Activated B cell treated with CpG ODN at 0.5 μM for 24 hours (primary cell): ENCODE measurements at regions of chr2 and their contacts with region 1.

Region 1: DNA sequence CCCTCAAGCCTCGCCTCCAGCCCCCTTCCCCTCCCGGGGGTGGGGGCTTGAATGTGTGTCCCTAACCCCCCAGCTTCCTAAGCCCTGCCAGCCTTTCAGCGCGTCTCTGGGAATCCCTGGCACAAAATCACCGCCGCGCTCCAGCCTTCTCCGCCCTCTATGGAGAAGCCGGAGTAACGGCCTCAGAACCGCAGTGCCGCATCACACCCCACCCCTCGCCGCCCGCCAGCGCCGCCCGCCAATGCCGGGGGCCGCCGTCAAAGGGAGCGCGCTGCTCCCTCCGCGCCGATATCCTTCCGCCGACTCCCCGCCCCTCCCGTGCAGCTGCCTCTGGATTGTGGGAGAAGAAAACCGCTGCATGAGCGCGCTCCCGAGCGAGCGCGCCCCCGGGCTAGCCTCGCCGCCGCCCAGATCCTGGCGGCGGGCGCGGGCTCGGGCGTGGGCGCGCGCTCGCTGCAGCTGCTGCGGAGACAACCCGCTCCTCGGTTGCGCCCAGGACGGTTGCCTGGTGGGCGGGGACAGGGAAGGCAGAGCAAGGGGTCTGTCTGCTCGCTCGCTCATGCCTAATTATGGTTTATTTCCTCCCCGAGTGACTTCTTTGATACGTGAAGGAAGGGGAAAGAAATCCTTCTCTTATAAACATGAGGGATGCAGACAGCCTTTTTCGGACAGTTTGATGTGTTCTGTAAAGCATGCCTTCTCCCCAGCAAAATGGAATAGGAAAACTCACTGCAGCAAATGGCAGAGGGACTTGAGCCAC is at the start of gene CCDC88A:
- DNase-seq: peak; percentile 86
- ATAC-seq: peak; percentile 87
- H3K4me3 Mint-ChIP-seq: peak within 1 kb of the TSS; percentile 95
- H3K27ac Mint-ChIP-seq: peak within 1 kb of the TSS; percentile 92
- H3K4me1 Mint-ChIP-seq: peaks cover 46% of the 10 kb centered on the region
- H3K27me3 Mint-ChIP-seq: no peaks in the 10 kb centered on the region
- CTCF ChIP-seq: no peak
- total RNA-seq, gene CCDC88A: 25.6 and 35.6 TPM in 2 replicates

Region 2: DNA sequence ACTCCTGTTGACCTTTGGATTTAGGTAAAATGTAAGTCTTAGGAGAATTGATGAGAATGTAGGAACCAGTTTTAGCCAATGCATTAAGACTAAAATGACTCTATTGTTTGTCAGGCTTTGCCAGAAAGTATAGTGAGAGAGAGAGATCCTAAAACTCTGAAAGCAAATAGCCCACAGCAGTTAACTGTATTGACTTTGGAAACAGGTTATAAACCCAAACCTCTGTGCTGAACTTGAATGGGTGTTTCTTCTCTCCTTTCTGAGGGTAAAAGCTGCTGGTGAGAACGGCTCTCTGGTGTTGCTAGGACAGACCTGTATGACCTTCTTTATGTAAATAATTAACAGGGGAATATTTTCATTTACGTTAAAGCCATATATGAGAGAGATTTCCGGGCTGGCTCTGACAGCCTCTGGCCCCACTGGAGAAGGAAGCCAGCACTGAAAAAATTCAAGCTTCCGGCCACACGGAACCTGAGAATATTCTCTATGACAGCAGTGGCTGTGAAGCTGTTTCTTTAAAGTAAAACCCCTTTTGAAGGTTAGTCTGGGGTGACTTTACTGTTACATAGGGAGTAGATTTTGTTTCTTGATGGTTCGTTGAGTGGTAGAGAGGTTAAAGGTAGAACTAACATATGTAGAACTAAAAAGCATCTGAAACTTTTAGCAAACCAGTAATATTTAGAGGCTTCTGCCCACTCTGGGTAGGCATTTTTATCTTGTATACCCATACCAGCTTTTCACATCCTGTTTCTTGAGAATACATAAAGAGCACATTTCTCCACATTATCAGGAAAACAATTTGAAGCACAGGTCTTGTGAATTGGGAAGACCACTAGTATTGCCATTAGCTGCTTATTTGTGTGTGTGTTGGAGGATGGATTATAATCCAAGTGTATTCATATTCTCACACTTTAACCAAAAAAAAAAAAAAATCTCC is 839.9 kb before region 1 on chr2:
- CTCF ChIA-PET with region 1: no interaction called
- POLR2A ChIA-PET with region 1: no interaction called
- intact Hi-C with region 1: loop called (anchors 5 kb)
- DNase-seq: no peak
- ATAC-seq: peak; percentile 66
- H3K4me3 Mint-ChIP-seq: peak overlapping the region; percentile 77
- H3K27ac Mint-ChIP-seq: peak overlapping the region; percentile 95
- H3K4me1 Mint-ChIP-seq: peaks cover 98% of the 10 kb centered on the region
- H3K27me3 Mint-ChIP-seq: no peaks in the 10 kb centered on the region
- CTCF ChIP-seq: no peak

Region 3: GRCh38 chr2:55282110-55282917 is 137.5 kb before region 1 on chr2:
- CTCF ChIA-PET with region 1: no interaction called
- POLR2A ChIA-PET with region 1: interaction called, 5 read pairs
- intact Hi-C with region 1: loop called (anchors 2 kb)
- DNase-seq: peak; percentile 83
- ATAC-seq: peak; percentile 99
- H3K4me3 Mint-ChIP-seq: peak overlapping the region; percentile 88
- H3K27ac Mint-ChIP-seq: peak overlapping the region; percentile 93
- H3K4me1 Mint-ChIP-seq: peaks cover 28% of the 10 kb centered on the region
- H3K27me3 Mint-ChIP-seq: no peaks in the 10 kb centered on the region
- CTCF ChIP-seq: no peak

Region 4: GRCh38 chr2:55403256-55403998 is 16.4 kb before region 1 on chr2:
- CTCF ChIA-PET with region 1: no interaction called
- POLR2A ChIA-PET with region 1: interaction called, 3 read pairs
- intact Hi-C with region 1: loop called (anchors 2 kb)
- DNase-seq: no peak
- ATAC-seq: no peak
- H3K4me3 Mint-ChIP-seq: no peak overlapping the region
- H3K27ac Mint-ChIP-seq: no peak overlapping the region
- H3K4me1 Mint-ChIP-seq: no peaks in the 10 kb centered on the region
- H3K27me3 Mint-ChIP-seq: no peaks in the 10 kb centered on the region
- CTCF ChIP-seq: no peak